ENCODE measurements at regions of chr2 and their contacts with region 1.

Region 1: GRCh38 chr2:48946449-48947048 is 191.0 kb upstream of the LHCGR start:
- DNase-seq: peak in 1 of 2 experiments; percentile 62
- H3K4me3 ChIP-seq: no peak overlapping the region
- H3K4me3 Mint-ChIP-seq: no peak overlapping the region
- H3K27ac Mint-ChIP-seq: no peak overlapping the region
- H3K4me1 ChIP-seq: no peaks in the 10 kb centered on the region
- H3K4me1 Mint-ChIP-seq: no peaks in the 10 kb centered on the region
- H3K27me3 ChIP-seq: no peaks in the 10 kb centered on the region; the same call in 1 of the 2 replicates
- H3K27me3 Mint-ChIP-seq: peaks cover 9% of the 10 kb centered on the region
- CTCF ChIP-seq: peak; percentile 87 to 93

Region 2: GRCh38 chr2:48841136-48841535 is 105.4 kb before region 1 on chr2:
- CTCF ChIA-PET with region 1: no interaction called
- POLR2A ChIA-PET with region 1: no interaction called
- intact Hi-C with region 1: no loop called
- DNase-seq: no peak
- H3K4me3 ChIP-seq: no peak overlapping the region
- H3K4me3 Mint-ChIP-seq: no peak overlapping the region
- H3K27ac Mint-ChIP-seq: no peak overlapping the region
- H3K4me1 ChIP-seq: 0 out of 2 replicates have a peak, but pooled peaks cover 6% of the 10 kb centered on the region
- H3K4me1 Mint-ChIP-seq: peaks cover 12% of the 10 kb centered on the region
- H3K27me3 ChIP-seq: no peaks in the 10 kb centered on the region
- H3K27me3 Mint-ChIP-seq: peaks cover 11% of the 10 kb centered on the region
- CTCF ChIP-seq: no peak

Region 3: DNA sequence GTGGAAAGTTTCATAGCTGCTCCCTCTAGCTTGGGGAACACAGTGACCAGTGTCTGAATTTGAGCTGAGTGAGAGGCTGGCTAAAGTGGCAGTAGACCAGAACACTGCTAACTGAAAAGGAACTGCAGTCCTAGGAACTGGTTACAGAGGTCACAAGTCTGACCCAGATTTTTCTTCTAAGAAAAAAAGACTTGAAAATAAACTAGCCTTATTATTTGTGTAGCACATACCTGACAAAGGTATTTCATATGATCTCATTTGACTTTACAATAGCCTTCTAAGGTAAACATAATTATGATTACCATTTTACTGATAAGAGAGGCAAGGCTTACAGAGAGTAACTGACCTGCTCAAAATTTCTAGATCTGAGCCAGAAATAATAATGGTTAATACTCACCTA is 54.2 kb after region 1 on chr2:
- CTCF ChIA-PET with region 1: no interaction called
- POLR2A ChIA-PET with region 1: no interaction called
- intact Hi-C with region 1: loop called (anchors 2 kb)
- DNase-seq: peak in 1 of 2 experiments; percentile 42
- H3K4me3 ChIP-seq: no peak overlapping the region
- H3K4me3 Mint-ChIP-seq: peak overlapping the region; percentile 29
- H3K27ac Mint-ChIP-seq: peak overlapping the region; percentile 83
- H3K4me1 ChIP-seq: peaks cover 26% of the 10 kb centered on the region
- H3K4me1 Mint-ChIP-seq: peaks cover 18% of the 10 kb centered on the region
- H3K27me3 ChIP-seq: no peaks in the 10 kb centered on the region
- H3K27me3 Mint-ChIP-seq: no peaks in the 10 kb centered on the region
- CTCF ChIP-seq: no peak

Region 4: DNA sequence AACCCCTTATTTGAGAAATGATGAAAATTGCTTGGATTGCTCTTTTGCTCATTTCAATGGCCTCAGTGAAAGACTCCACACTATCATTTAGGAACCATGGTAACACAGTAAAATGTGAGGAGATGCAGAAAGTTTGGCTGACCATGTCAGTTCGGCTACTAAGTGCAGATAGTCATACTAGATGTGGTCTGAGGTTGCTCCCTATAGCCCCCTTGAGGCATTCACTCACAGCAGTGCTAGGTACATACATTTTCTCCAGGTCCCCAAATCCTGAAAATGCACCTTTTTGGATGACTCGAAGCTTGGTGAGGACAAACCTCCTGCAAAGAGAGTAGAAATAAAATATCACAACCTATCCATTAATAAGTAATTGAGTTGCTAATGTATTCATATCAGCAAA is 121.4 kb after region 1 on chr2:
- CTCF ChIA-PET with region 1: no interaction called
- POLR2A ChIA-PET with region 1: no interaction called
- intact Hi-C with region 1: loop called (anchors 1 kb)
- DNase-seq: no peak
- H3K4me3 ChIP-seq: no peak overlapping the region
- H3K4me3 Mint-ChIP-seq: no peak overlapping the region
- H3K27ac Mint-ChIP-seq: no peak overlapping the region
- H3K4me1 ChIP-seq: no peaks in the 10 kb centered on the region
- H3K4me1 Mint-ChIP-seq: no peaks in the 10 kb centered on the region
- H3K27me3 ChIP-seq: no peaks in the 10 kb centered on the region
- H3K27me3 Mint-ChIP-seq: peaks cover 6% of the 10 kb centered on the region
- CTCF ChIP-seq: no peak

Region 5: GRCh38 chr2:49286045-49286444 is 339.5 kb after region 1 on chr2:
- CTCF ChIA-PET with region 1: no interaction called
- POLR2A ChIA-PET with region 1: no interaction called
- intact Hi-C with region 1: loop called (anchors 1 kb)
- DNase-seq: peak in 1 of 2 experiments; percentile 16
- H3K4me3 ChIP-seq: no peak overlapping the region
- H3K4me3 Mint-ChIP-seq: no peak overlapping the region
- H3K27ac Mint-ChIP-seq: no peak overlapping the region
- H3K4me1 ChIP-seq: no peaks in the 10 kb centered on the region
- H3K4me1 Mint-ChIP-seq: no peaks in the 10 kb centered on the region
- H3K27me3 ChIP-seq: no peaks in the 10 kb centered on the region
- H3K27me3 Mint-ChIP-seq: peaks cover 9% of the 10 kb centered on the region
- CTCF ChIP-seq: peak; percentile 29 to 41

Region 6: GRCh38 chr2:49490710-49491109 is 544.2 kb after region 1 on chr2:
- CTCF ChIA-PET with region 1: interaction called, 4 read pairs
- POLR2A ChIA-PET with region 1: no interaction called
- intact Hi-C with region 1: loop called (anchors 1 kb)
- DNase-seq: peak; percentile 61 to 64
- H3K4me3 ChIP-seq: no peak overlapping the region
- H3K4me3 Mint-ChIP-seq: no peak overlapping the region
- H3K27ac Mint-ChIP-seq: no peak overlapping the region
- H3K4me1 ChIP-seq: no peaks in the 10 kb centered on the region
- H3K4me1 Mint-ChIP-seq: no peaks in the 10 kb centered on the region
- H3K27me3 ChIP-seq: no peaks in the 10 kb centered on the region
- H3K27me3 Mint-ChIP-seq: no peaks in the 10 kb centered on the region
- CTCF ChIP-seq: peak; percentile 62 to 69

Region 7: DNA sequence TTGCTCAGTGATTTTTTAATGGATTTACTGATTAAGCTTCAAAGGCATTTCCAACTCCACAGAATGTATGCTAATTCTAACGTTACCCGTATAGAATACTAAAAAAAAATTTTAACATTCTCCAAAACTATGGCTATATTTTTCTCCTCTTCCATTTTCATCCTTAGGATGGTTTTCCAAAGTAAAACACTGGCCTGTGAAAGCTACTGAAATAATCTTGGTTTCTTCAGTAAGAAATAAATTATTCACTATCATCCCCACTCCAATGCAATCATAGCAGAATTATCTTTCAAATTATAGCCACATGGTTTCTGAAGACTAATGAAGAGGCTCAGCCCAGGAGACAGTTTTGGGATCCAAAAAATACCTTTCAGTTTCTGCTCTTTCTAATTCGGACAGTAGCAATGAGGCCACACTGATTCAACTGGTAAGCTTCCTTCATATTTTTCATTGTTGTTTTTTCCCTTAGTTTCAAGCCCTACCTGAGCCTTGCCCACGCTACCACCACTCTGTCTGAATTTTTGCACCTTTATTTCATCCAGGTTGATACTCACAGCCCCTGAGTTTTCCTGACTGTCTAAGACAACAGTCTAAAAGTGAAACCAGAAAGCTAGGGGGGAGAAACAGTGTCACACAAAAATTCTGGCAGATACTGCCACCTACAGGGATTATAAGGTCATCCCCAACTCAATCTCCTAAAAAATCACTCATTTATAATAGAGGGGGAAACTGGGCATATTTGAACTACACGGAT is 1197.5 kb after region 1 on chr2:
- CTCF ChIA-PET with region 1: no interaction called
- POLR2A ChIA-PET with region 1: no interaction called
- intact Hi-C with region 1: loop called (anchors 1 kb)
- DNase-seq: peak in 1 of 2 experiments; percentile 37
- H3K4me3 ChIP-seq: peak overlapping the region; percentile 5; the same call in 1 of the 2 replicates
- H3K4me3 Mint-ChIP-seq: peak overlapping the region; percentile 47
- H3K27ac Mint-ChIP-seq: no peak overlapping the region
- H3K4me1 ChIP-seq: no peaks in the 10 kb centered on the region
- H3K4me1 Mint-ChIP-seq: no peaks in the 10 kb centered on the region
- H3K27me3 ChIP-seq: no peaks in the 10 kb centered on the region
- H3K27me3 Mint-ChIP-seq: peaks cover 3% of the 10 kb centered on the region
- CTCF ChIP-seq: peak; percentile 60 to 66

Region 8: GRCh38 chr2:50492477-50492851 is 1545.9 kb after region 1 on chr2:
- CTCF ChIA-PET with region 1: no interaction called
- POLR2A ChIA-PET with region 1: no interaction called
- intact Hi-C with region 1: loop called (anchors 5 kb)
- DNase-seq: peak; percentile 35 to 61
- H3K4me3 ChIP-seq: no peak overlapping the region
- H3K4me3 Mint-ChIP-seq: no peak overlapping the region
- H3K27ac Mint-ChIP-seq: no peak overlapping the region
- H3K4me1 ChIP-seq: no peaks in the 10 kb centered on the region
- H3K4me1 Mint-ChIP-seq: no peaks in the 10 kb centered on the region
- H3K27me3 ChIP-seq: no peaks in the 10 kb centered on the region
- H3K27me3 Mint-ChIP-seq: peaks cover 12% of the 10 kb centered on the region
- CTCF ChIP-seq: peak; percentile 59 to 69